Right cardiac atrium (tissue), 5 donors: ENCODE measurements at regions of chr20 and their contacts with region 1.

Region 1: DNA sequence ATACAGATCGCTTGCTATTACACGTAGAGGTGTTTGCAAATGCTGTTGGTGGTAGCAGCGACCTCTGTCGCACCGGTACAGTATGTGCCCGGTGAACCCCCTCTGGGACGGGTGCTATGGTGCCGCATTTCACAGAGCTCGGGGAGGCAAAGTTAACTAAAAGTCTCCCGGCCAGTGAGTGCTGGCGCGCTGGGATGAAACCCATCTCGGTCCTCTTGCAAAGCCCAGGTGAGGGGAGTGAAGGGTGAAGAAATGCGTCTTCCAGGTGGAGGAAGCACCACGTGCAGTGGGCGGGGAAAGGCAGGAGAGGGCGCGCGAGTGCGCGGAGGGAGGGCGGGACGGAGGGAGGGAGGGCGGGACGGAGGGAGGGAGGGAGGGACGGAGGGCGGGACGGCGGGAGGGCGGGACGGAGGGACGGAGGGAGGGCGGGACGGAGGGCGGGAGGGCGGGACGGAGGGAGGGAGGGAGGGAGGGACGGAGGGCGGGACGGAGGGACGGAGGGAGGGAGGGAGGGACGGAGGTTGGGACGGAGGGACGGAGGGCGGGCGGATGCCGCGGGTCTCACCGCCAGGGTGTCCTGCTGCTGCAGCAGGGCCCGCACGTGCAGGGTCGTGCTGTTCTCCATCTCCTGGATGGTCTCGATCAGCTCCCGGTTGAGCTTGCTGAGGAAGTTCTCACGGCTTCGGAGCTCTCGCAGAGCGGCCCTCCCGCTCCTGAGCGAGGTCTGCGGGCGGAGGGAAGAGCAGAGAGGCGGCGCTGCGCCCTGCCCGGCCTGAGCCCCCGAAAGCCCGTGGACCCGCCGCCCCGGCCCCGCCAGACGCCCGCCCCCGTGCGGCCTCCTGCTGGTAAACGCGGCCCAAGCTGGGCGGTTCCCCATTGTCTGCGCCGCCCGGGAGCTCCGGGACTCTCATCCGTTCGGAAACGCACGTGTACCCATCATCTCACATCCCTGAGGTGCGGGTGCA is 11.7 kb downstream of the C20orf96 start:
- DNase-seq: peak; percentile 59 to 81 (median 80)
- ATAC-seq: peak; percentile 71 to 77
- H3K4me3 ChIP-seq: peak overlapping the region; percentile 4
- H3K27ac ChIP-seq: no peak overlapping the region
- H3K4me1 ChIP-seq: no peaks in the 10 kb centered on the region
- H3K27me3 ChIP-seq: no peaks in the 10 kb centered on the region

Region 2: DNA sequence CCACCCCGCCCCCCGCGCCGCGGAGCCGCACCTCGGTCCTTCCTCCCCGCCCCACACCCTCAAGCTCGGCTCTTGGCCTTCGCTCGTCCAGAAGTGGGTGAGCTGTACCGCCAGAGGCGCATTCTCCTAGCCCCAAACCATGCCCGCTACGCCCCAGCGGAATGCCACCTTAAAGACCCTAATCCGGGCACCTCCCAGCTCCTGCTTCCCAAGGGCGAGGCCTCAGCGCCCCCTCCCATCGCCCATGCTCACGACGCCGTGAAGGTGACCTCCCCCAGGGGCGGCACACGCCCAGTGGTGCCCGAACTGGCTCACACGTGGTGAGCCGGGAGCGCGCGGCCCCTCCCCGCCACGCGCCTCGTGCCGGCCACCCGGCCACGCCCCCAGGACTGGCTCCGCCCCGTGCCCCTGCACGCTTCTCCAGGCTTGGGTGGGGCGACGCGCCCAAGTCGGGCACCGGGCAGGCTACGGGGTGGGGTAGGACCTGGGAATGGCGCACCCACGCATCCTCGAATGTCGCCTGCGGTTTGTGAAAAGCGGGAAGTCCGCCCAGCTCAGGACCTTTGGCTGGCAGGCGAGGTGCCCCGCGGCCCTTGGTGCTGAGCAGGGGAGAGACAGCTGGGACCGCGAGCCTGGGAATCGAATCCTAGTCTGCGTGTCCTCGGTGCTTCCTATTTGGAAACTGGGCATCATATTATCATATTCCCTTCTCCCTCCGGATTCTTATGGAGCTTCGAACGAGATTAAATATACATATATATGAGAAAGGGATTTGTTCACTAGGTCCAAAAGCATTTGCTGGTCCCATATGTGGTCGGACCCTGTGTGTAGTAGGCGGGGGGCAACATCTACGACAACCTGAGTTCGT is 45.5 kb after region 1 on chr20:
- intact Hi-C with region 1: loop called in 1 of 4 experiments (anchors 10 kb)
- DNase-seq: peak; percentile 93 to 97 (median 97)
- ATAC-seq: peak; percentile 81 to 87
- H3K4me3 ChIP-seq: peak overlapping the region; percentile 79
- H3K27ac ChIP-seq: peak overlapping the region; percentile 84
- H3K4me1 ChIP-seq: no peaks in the 10 kb centered on the region
- H3K27me3 ChIP-seq: no peaks in the 10 kb centered on the region